ENCODE measurements at regions of chr14 and their contacts with region 1.

Region 1: DNA sequence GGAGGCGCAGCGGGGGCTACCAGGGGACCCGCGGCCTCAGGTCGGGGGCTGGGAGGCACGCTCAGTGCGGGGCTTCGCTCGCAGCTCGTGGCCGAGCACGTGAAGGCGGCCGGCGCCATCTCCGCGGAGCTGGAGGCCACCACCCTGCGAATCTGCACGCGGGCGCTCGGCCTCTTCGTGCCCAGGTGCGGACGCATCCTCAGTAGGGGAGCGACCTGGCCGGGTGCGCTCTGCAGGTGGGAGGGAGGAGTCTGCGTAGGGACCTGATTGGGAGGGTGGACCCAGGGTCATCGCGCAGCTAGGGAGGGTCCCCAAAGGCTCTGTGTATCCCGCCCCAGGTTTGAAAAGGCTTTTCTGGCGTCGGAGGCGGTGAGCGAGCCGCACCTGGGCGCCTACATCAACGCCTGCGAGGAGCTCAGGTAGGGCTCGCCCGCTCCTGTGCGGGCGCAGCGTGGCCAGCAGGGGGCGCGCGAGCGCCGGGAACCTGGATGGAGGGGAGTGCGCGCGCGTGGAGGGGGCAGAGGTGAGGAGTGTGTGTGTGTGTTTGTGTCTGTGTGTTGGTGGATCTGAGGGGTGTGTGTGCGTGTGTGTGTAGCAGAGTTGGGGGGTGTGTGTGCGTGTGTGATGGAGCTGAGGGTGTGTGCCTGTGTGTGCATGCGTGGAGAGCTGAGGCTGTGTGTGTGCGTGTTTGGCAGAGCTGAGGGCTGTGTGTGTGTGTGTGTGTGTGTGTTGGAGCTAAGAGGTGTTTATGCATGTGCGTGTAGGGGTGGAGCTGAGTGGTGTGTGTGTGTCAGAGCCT is 10.3 kb downstream of the EXOC3L4 start:
- DNase-seq: peak; percentile 52 to 81 (median 73)
- ATAC-seq: peak; percentile 87
- H3K4me3 ChIP-seq: no peak overlapping the region
- H3K4me3 Mint-ChIP-seq: peak overlapping the region in 7 of 10 donors; percentile 5 to 64 (median 53)
- H3K27ac ChIP-seq: no peak overlapping the region
- H3K27ac Mint-ChIP-seq: peak overlapping the region in 2 of 9 donors; percentile 47 to 57
- H3K4me1 ChIP-seq: peaks cover 0 to 3% of the 10 kb centered on the region in 2 donors
- H3K4me1 Mint-ChIP-seq: peaks cover 0 to 16% (median 8%) of the 10 kb centered on the region in 7 donors
- H3K27me3 ChIP-seq: no peaks in the 10 kb centered on the region
- H3K27me3 Mint-ChIP-seq: peaks cover 21 to 39% (median 28%) of the 10 kb centered on the region in 5 donors

Region 2: GRCh38 chr14:101809671-101810514 is 1295.0 kb before region 1 on chr14:
- CTCF ChIA-PET with region 1: no interaction called
- POLR2A ChIA-PET with region 1: no interaction called
- intact Hi-C with region 1: no loop called
- DNase-seq: peak; percentile 57 to 97 (median 95)
- ATAC-seq: peak; percentile 94
- H3K4me3 ChIP-seq: peak overlapping the region; percentile 92
- H3K4me3 Mint-ChIP-seq: peak overlapping the region; percentile 94 to 98 (median 96)
- H3K27ac ChIP-seq: peak overlapping the region; percentile 99
- H3K27ac Mint-ChIP-seq: peak overlapping the region; percentile 90 to 100 (median 99)
- H3K4me1 ChIP-seq: peaks cover 36 to 38% of the 10 kb centered on the region in 2 donors
- H3K4me1 Mint-ChIP-seq: peaks cover 27 to 62% (median 55%) of the 10 kb centered on the region in 7 donors
- H3K27me3 ChIP-seq: no peaks in the 10 kb centered on the region
- H3K27me3 Mint-ChIP-seq: no peaks in the 10 kb centered on the region

Region 3: GRCh38 chr14:102749393-102750305 is 355.2 kb before region 1 on chr14:
- CTCF ChIA-PET with region 1: no interaction called
- POLR2A ChIA-PET with region 1: no interaction called
- intact Hi-C with region 1: no loop called
- DNase-seq: no peak
- ATAC-seq: no peak
- H3K4me3 ChIP-seq: no peak overlapping the region
- H3K4me3 Mint-ChIP-seq: no peak overlapping the region
- H3K27ac ChIP-seq: no peak overlapping the region
- H3K27ac Mint-ChIP-seq: no peak overlapping the region
- H3K4me1 ChIP-seq: no peaks in the 10 kb centered on the region
- H3K4me1 Mint-ChIP-seq: no peaks in the 10 kb centered on the region
- H3K27me3 ChIP-seq: no peaks in the 10 kb centered on the region
- H3K27me3 Mint-ChIP-seq: no peaks in the 10 kb centered on the region

Region 4: GRCh38 chr14:103141119-103141796 is 36.4 kb after region 1 on chr14:
- CTCF ChIA-PET with region 1: no interaction called
- POLR2A ChIA-PET with region 1: no interaction called
- intact Hi-C with region 1: loop called in 1 of 2 experiments (anchors 1 kb)
- DNase-seq: peak in 1 of 9 donors; percentile 8
- ATAC-seq: peak; percentile 47
- H3K4me3 ChIP-seq: no peak overlapping the region
- H3K4me3 Mint-ChIP-seq: peak overlapping the region in 2 of 10 donors; percentile 7 to 23
- H3K27ac ChIP-seq: no peak overlapping the region
- H3K27ac Mint-ChIP-seq: no peak overlapping the region
- H3K4me1 ChIP-seq: no peaks in the 10 kb centered on the region
- H3K4me1 Mint-ChIP-seq: peaks cover 0 to 10% (median 6%) of the 10 kb centered on the region in 7 donors
- H3K27me3 ChIP-seq: no peaks in the 10 kb centered on the region
- H3K27me3 Mint-ChIP-seq: peaks cover 31 to 55% (median 48%) of the 10 kb centered on the region in 5 donors

Region 5: GRCh38 chr14:103185051-103185992 is 80.5 kb after region 1 on chr14:
- CTCF ChIA-PET with region 1: interaction called, 9 read pairs
- POLR2A ChIA-PET with region 1: no interaction called
- intact Hi-C with region 1: loop called (anchors 1 to 2 kb)
- DNase-seq: peak in 5 of 9 donors; percentile 8 to 17 (median 15)
- ATAC-seq: no peak
- H3K4me3 ChIP-seq: no peak overlapping the region
- H3K4me3 Mint-ChIP-seq: no peak overlapping the region
- H3K27ac ChIP-seq: no peak overlapping the region
- H3K27ac Mint-ChIP-seq: peak overlapping the region in 1 of 9 donors; percentile 32
- H3K4me1 ChIP-seq: no peaks in the 10 kb centered on the region
- H3K4me1 Mint-ChIP-seq: peaks cover 0 to 18% (median 10%) of the 10 kb centered on the region in 7 donors
- H3K27me3 ChIP-seq: no peaks in the 10 kb centered on the region
- H3K27me3 Mint-ChIP-seq: peaks cover 31 to 52% (median 51%) of the 10 kb centered on the region in 5 donors

Region 6: GRCh38 chr14:103292426-103293374 is 187.8 kb after region 1 on chr14:
- CTCF ChIA-PET with region 1: interaction called, 5 read pairs
- POLR2A ChIA-PET with region 1: no interaction called
- intact Hi-C with region 1: loop called (anchors 1 kb)
- DNase-seq: peak; percentile 34 to 77 (median 56)
- ATAC-seq: peak; percentile 92
- H3K4me3 ChIP-seq: no peak overlapping the region
- H3K4me3 Mint-ChIP-seq: no peak overlapping the region
- H3K27ac ChIP-seq: no peak overlapping the region
- H3K27ac Mint-ChIP-seq: no peak overlapping the region
- H3K4me1 ChIP-seq: no peaks in the 10 kb centered on the region
- H3K4me1 Mint-ChIP-seq: peaks cover 0 to 7% (median 0%) of the 10 kb centered on the region in 7 donors
- H3K27me3 ChIP-seq: no peaks in the 10 kb centered on the region
- H3K27me3 Mint-ChIP-seq: peaks cover 10 to 27% (median 20%) of the 10 kb centered on the region in 5 donors

Measured in naive thymus-derived CD4-positive, alpha-beta T cell (primary cell).